ENCODE measurements at regions of chr4 and their contacts with region 1.

Region 1: DNA sequence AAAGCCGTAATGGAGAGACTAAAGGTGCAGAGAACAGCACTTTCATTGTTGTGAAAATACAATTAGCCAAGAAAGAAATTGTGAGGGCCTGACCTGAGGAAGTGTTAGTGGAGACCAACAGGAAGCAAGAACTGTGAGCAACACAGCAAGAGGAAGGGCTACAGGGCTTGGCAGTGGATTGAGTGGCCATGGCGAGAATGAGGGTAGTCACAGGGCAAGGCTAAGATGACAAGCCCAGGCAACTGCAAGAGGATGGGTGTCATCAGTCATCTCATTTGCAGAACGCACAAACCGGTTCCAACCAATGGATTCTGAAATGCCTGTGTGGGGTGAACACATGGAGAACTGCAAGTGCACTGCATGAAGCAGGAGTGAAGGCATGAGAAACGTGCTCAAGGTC is 3.6 kb downstream of the SLC10A6 start:
- DNase-seq: no peak

Region 2: GRCh38 chr4:86890790-86891189 is 45.2 kb after region 1 on chr4:
- intact Hi-C with region 1: loop called in 1 of 2 experiments (anchors 1 kb)
- DNase-seq: no peak